ENCODE measurements at regions of chr19 and their contacts with region 1.

Region 1: DNA sequence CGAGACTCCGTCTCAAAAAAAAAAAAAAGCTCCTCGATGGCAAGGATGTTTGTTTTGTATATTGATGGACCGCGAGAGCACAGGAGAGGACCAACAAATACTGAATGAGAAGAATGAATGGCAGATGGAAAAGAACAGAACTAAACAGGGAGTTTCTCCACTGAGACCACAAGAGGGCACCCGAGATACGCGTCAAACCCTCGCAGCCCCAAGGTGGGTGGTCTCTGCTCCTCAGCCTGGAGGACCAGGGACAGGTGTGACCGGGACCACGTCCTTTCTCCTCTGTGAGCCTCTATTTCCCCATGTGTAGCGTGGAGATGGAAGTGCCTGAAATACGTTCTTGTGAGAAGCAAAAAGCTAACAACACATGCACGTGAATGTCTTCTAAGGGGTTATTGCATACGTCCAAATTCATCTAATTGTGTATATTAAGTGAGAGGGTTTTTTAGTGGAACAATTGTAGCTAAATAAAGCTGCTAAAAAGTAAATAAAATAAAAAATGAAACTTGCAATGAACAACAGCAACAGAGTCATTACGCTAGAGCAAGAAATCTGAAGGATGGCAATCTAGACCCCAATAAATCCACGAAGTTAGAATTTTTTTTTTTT is 8.3 kb upstream of the CDC42EP5 start:
- DNase-seq: peak; percentile 64 to 67 (median 65)
- H3K4me3 ChIP-seq: no peak overlapping the region
- H3K27ac ChIP-seq: no peak overlapping the region
- H3K4me1 ChIP-seq: peaks cover 4 to 23% (median 17%) of the 10 kb centered on the region in 4 experiments
- H3K27me3 ChIP-seq: peaks cover 0 to 11% (median 2%) of the 10 kb centered on the region in 5 experiments

Region 2: DNA sequence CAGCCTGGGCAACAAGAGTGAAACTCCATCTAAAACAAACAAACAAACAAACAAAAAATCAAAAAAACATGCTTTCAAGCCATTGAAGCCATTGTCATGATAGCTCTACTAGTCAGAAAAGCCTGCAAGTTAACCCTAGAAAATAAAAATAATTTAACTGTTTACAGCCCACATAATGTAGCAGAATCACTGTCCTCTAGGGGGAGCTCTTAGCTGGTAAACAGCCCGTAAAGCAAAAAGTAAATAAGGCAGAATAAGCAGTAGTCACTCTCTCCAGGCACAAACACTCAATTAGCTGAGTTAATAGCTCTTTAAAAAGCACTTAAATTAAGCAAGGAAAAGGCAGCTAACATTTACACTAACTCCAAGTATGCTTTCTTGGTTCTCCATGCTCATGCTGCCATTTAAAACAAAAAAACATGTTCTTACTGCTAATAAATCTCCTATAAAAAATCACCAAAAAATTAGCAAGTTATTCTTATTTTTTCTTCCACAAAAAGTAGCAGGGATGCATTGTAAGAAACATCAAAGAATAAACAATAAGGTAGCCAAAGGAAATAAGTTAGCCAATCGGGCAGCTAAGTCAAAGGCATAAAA is 192.7 kb after region 1 on chr19:
- CTCF ChIA-PET with region 1: interaction called, 17 read pairs
- POLR2A ChIA-PET with region 1: no interaction called
- DNase-seq: peak; percentile 57 to 78 (median 73)
- H3K4me3 ChIP-seq: no peak overlapping the region
- H3K27ac ChIP-seq: no peak overlapping the region
- H3K4me1 ChIP-seq: no peaks in the 10 kb centered on the region
- H3K27me3 ChIP-seq: peaks cover 0 to 6% (median 5%) of the 10 kb centered on the region in 5 experiments